ENCODE measurements at regions of chr20 and their contacts with region 1.

Region 1: GRCh38 chr20:4592316-4593148 is 129.2 kb upstream of the PRND start:
- DNase-seq: no peak
- ATAC-seq: peak; percentile 96
- H3K4me3 ChIP-seq: peak overlapping the region; percentile 36 to 56
- H3K27ac ChIP-seq: no peak overlapping the region
- H3K4me1 ChIP-seq: peaks cover 5 to 13% of the 10 kb centered on the region in 2 experiments; a peak in 2 of 4 replicates
- H3K27me3 ChIP-seq: no peaks in the 10 kb centered on the region
- CTCF ChIP-seq: peak; percentile 81 to 90 (median 87)
- POLR2A ChIP-seq: no peak
- RAD21 ChIP-seq: peak; percentile 98

Region 2: DNA sequence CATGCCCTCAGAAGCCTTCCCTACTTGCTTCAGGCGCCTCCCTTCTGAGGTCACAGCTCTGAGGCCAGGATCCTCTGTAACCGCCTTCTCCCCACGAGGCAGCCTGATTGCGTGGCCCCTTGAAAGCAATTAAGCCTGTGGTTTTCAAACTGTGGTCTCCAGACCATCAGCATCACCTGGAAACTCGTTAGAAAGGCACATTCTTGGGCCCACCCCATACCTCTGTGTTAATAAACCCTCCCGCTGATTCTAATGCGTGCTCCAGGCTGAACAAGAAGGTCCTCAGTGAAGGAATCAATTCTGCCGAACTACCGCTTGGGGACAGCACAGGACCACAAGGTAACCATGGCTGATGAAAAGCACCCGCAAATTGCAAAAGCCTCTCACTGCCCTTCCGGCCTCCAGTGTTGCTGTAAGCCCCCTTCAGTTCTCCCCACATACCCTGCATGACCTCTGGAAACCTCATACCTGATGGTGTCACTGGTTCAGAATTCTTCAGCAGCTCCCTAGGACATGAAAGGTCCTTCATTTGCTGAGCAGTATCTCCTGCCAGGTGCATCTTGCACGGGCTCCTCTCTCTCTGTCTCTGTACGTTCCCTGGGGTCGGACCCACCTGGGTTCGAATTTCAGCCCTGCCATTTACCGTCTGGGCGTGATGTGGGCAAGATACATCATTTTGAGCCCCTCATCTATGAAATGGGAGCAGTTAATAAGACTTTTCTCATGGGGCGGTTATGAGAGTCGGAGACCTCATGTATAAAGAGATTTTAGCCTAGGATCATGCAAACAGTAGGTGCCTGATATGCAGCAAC is 483.8 kb before region 1 on chr20:
- CTCF ChIA-PET with region 1: interaction called, 4 read pairs
- POLR2A ChIA-PET with region 1: no interaction called
- RAD21 ChIA-PET with region 1: no interaction called
- intact Hi-C with region 1: loop called (anchors 2 kb)
- DNase-seq: peak; percentile 83
- ATAC-seq: peak; percentile 94
- H3K4me3 ChIP-seq: no peak overlapping the region
- H3K27ac ChIP-seq: no peak overlapping the region; the same call in 1 of the 2 replicates
- H3K4me1 ChIP-seq: peaks cover 13 to 29% of the 10 kb centered on the region in 2 experiments; a peak in 3 of 4 replicates
- H3K27me3 ChIP-seq: no peaks in the 10 kb centered on the region
- CTCF ChIP-seq: peak; percentile 97 to 99 (median 98)
- POLR2A ChIP-seq: no peak
- RAD21 ChIP-seq: peak; percentile 100

Region 3: DNA sequence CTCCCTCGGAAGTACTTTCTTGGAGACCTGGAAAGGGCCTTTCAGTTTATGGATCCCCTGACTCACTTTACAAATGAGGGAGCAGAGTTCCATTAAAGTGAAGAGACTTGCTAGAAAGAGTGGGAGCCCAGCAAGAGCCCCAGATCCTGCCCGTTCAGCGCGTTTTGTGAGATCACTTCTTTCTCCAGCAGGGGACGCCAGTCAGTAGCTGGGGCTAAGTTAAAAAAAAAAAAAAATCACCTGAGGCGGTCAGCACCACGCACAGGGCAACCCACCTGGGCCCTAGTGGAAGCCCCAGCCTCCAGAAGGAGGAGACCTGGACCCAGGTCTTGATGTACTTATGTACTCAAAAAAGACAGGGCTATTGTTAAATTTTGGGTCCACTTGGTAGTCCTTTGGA is 302.7 kb before region 1 on chr20:
- CTCF ChIA-PET with region 1: interaction called, 5 read pairs
- POLR2A ChIA-PET with region 1: interaction called, 3 read pairs
- RAD21 ChIA-PET with region 1: no interaction called
- intact Hi-C with region 1: loop called (anchors 1 kb)
- DNase-seq: peak; percentile 13
- ATAC-seq: peak; percentile 75
- H3K4me3 ChIP-seq: no peak overlapping the region
- H3K27ac ChIP-seq: no peak overlapping the region
- H3K4me1 ChIP-seq: no peaks in the 10 kb centered on the region; a peak in 1 of 4 replicates
- H3K27me3 ChIP-seq: no peaks in the 10 kb centered on the region
- CTCF ChIP-seq: peak; percentile 58 to 77 (median 76)
- POLR2A ChIP-seq: no peak
- RAD21 ChIP-seq: peak; percentile 69